WTC11 (cell line): ENCODE measurements at regions of chr15 and their contacts with region 1.

Region 1: DNA sequence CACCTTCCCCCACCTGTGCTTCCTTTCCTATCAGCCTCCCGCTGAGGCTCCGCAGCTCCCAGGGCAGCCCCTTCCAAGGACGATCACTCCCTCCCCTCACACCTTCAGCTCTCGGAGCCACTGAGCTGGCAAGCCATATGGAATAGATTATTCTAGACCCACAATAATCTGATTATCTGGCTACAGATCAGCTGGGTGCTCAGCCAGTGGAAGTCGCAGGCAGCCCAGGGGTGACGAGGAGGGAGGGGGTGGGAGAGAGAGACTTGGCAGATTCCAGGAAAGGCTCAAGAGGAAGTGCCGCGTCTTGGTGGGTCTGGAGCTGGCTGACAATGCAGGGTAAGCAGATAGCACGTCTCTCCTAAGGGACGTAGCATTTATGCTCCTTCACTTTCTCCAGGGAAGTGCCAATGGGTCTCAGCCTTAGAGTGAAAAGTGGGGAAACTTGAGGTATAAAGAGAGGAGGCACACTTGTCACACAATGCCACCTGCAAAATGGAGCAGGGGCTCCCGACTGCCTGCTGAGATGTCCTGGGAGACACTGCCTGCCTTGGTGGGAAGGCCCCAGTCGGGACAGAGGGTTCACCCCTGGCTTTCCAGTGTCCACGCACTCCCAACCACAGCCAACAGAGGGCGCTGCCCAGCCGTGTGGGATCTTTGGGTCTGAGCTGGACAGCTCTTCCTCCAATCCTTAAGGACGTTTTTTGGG is 9.4 kb upstream of the MESP1 start:
- DNase-seq: peak; percentile 94
- ATAC-seq: peak; percentile 98
- H3K4me3 Mint-ChIP-seq: no peak overlapping the region
- H3K27ac Mint-ChIP-seq: no peak overlapping the region
- H3K4me1 Mint-ChIP-seq: peaks cover 13% of the 10 kb centered on the region
- H3K27me3 Mint-ChIP-seq: peaks cover 8% of the 10 kb centered on the region
- CTCF ChIP-seq: peak; percentile 97

Region 2: GRCh38 chr15:89732451-89733172 is 27.8 kb before region 1 on chr15:
- CTCF ChIA-PET with region 1: interaction called, 10 read pairs
- POLR2A ChIA-PET with region 1: no interaction called
- DNase-seq: no peak
- ATAC-seq: peak; percentile 28
- H3K4me3 Mint-ChIP-seq: no peak overlapping the region
- H3K27ac Mint-ChIP-seq: no peak overlapping the region
- H3K4me1 Mint-ChIP-seq: no peaks in the 10 kb centered on the region
- H3K27me3 Mint-ChIP-seq: peaks cover 4% of the 10 kb centered on the region
- CTCF ChIP-seq: no peak

Region 3: DNA sequence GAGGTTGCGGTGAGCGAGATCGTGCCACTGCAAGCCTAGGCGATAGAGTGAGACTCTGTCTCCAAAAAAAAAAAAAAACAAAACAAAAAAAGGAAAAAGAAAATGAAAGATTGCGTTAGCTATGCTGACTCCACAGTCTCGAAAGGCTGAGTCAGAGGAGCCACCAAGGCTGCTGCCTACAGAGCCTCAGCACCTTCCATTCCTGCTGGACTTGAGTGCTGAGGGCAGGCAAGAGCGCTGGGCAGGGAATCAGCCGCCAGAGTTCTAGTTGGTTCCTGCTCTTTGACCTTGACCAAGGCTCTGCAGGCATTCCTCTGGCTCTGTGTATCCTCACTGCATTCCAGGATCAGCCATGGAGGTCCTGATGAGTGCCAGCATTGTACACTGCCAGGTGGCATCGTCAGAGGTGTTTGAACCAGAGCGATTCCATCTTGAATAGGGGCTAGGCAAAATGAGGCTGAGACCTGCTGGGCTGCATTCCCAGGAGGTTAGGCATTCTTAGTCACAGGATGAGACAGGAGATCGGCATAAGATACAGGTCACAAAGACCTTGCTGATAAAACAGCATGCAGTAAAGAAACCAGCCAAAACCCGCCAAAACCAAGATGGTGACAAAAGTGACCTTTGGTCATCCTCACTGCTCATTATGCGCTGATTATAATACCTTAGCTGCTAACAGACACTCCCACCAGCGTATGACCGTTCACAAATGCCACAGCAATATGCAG is 21.6 kb after region 1 on chr15:
- CTCF ChIA-PET with region 1: interaction called, 33 read pairs
- POLR2A ChIA-PET with region 1: no interaction called
- DNase-seq: no peak
- ATAC-seq: no peak
- H3K4me3 Mint-ChIP-seq: no peak overlapping the region
- H3K27ac Mint-ChIP-seq: no peak overlapping the region
- H3K4me1 Mint-ChIP-seq: peaks cover 25% of the 10 kb centered on the region
- H3K27me3 Mint-ChIP-seq: peaks cover 28% of the 10 kb centered on the region
- CTCF ChIP-seq: no peak

Region 4: DNA sequence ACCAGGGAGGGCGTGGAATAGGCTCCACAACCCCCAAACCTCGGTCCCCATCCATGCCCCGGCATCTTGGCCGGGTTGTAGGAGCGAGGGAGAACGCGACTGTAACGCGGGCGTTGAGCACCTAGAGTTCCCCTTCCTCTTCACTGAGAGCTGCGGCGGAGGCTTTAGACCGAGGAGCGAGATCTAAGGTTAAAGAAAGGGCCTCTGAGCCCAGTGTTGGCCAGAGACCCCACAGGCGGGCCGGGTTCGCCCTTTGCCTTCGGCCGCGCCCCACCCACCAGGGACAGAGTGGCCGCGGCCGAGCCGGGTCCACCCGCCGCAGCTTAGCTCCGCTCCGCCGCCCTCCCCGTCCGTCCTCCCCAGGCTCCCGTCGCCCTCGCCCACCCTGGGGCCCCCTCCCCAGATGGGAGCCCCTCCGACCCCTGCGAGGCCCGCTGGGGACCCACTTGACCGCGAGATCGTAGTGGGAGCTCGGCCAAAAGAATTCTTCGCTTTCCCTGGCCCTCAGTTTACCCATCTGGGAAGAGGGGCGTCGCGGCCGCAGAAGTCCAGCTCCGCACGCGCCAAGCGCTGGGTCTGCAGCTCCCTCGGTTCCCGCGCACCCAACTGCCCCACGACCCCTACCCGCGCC is 53.8 kb after region 1 on chr15:
- CTCF ChIA-PET with region 1: interaction called, 10 read pairs
- POLR2A ChIA-PET with region 1: no interaction called
- DNase-seq: no peak
- ATAC-seq: no peak
- H3K4me3 Mint-ChIP-seq: peak overlapping the region; percentile 35; the same call in 1 of the 2 replicates
- H3K27ac Mint-ChIP-seq: no peak overlapping the region
- H3K4me1 Mint-ChIP-seq: 0 out of 2 replicates have a peak, but pooled peaks cover 8% of the 10 kb centered on the region
- H3K27me3 Mint-ChIP-seq: peaks cover 36% of the 10 kb centered on the region
- CTCF ChIP-seq: no peak

Region 5: GRCh38 chr15:89888214-89888804 is 127.9 kb after region 1 on chr15:
- CTCF ChIA-PET with region 1: interaction called, 49 read pairs
- POLR2A ChIA-PET with region 1: no interaction called
- DNase-seq: no peak
- ATAC-seq: peak; percentile 24; the same call in 1 of the 2 replicates
- H3K4me3 Mint-ChIP-seq: no peak overlapping the region
- H3K27ac Mint-ChIP-seq: no peak overlapping the region
- H3K4me1 Mint-ChIP-seq: peaks cover 6% of the 10 kb centered on the region
- H3K27me3 Mint-ChIP-seq: no peaks in the 10 kb centered on the region
- CTCF ChIP-seq: no peak